Ascending aorta (tissue), 2 donors: ENCODE measurements at regions of chr6 and their contacts with region 1.

Region 1: GRCh38 chr6:125153391-125154117 is at the start of gene TPD52L1:
- DNase-seq: peak; percentile 48 to 89
- H3K4me3 ChIP-seq: peak within 1 kb of the TSS; percentile 74 to 89
- H3K27ac ChIP-seq: peak within 1 kb of the TSS; percentile 81 to 82
- H3K4me1 ChIP-seq: peaks cover 0 to 14% of the 10 kb centered on the region in 2 donors
- H3K27me3 ChIP-seq: no peaks in the 10 kb centered on the region
- CTCF ChIP-seq: peak; percentile 78 to 88 (median 80)
- total RNA-seq, gene TPD52L1: 93.6 TPM

Region 2: GRCh38 chr6:124742971-124743370 is 410.6 kb before region 1 on chr6:
- intact Hi-C with region 1: no loop called
- DNase-seq: no peak
- H3K4me3 ChIP-seq: no peak overlapping the region
- H3K27ac ChIP-seq: no peak overlapping the region
- H3K4me1 ChIP-seq: no peaks in the 10 kb centered on the region
- H3K27me3 ChIP-seq: no peaks in the 10 kb centered on the region
- CTCF ChIP-seq: no peak

Region 3: GRCh38 chr6:124812067-124812466 is 341.5 kb before region 1 on chr6:
- intact Hi-C with region 1: no loop called
- DNase-seq: no peak
- H3K4me3 ChIP-seq: no peak overlapping the region
- H3K27ac ChIP-seq: no peak overlapping the region
- H3K4me1 ChIP-seq: no peaks in the 10 kb centered on the region
- H3K27me3 ChIP-seq: no peaks in the 10 kb centered on the region
- CTCF ChIP-seq: no peak

Region 4: GRCh38 chr6:125191916-125192609 is 38.5 kb after region 1 on chr6:
- intact Hi-C with region 1: loop called (anchors 2 kb)
- DNase-seq: peak; percentile 10 to 77
- H3K4me3 ChIP-seq: no peak overlapping the region
- H3K27ac ChIP-seq: no peak overlapping the region
- H3K4me1 ChIP-seq: peaks cover 10 to 30% of the 10 kb centered on the region in 2 donors
- H3K27me3 ChIP-seq: no peaks in the 10 kb centered on the region
- CTCF ChIP-seq: peak; percentile 49 to 71 (median 65)

Region 5: GRCh38 chr6:125262016-125263013 is 108.8 kb after region 1 on chr6:
- intact Hi-C with region 1: loop called (anchors 5 kb)
- DNase-seq: peak in 1 of 2 donors; percentile 86
- H3K4me3 ChIP-seq: peak overlapping the region in 1 of 2 donors; percentile 16
- H3K27ac ChIP-seq: peak overlapping the region; percentile 66 to 71
- H3K4me1 ChIP-seq: peaks cover 0 to 13% of the 10 kb centered on the region in 2 donors
- H3K27me3 ChIP-seq: no peaks in the 10 kb centered on the region
- CTCF ChIP-seq: no peak

Region 6: GRCh38 chr6:125314019-125314581 is 160.5 kb after region 1 on chr6:
- intact Hi-C with region 1: no loop called
- DNase-seq: peak; percentile 9 to 87
- H3K4me3 ChIP-seq: no peak overlapping the region
- H3K27ac ChIP-seq: peak overlapping the region in 1 of 2 donors; percentile 29
- H3K4me1 ChIP-seq: no peaks in the 10 kb centered on the region
- H3K27me3 ChIP-seq: no peaks in the 10 kb centered on the region
- CTCF ChIP-seq: peak; percentile 77 to 90 (median 83)

Region 7: DNA sequence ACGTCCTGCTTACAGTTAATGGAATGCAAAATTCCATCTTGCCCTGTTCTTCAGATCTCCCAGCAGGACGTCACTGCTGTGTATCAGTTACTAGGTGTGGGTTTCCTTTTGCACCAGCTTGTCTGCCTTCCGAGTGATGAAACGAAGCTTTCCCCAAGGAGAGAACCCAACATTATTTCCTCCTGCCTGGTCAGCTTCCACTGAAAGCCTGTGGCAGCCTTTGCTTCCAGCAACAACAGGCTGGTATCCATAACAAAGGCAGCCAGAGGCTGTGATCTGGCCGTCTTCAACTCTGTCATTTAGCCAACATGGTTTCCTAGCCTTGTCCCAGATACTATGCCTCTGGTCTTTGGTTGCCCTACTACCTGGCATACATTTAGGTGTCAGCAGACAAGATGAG is 517.0 kb after region 1 on chr6:
- intact Hi-C with region 1: no loop called
- DNase-seq: no peak
- H3K4me3 ChIP-seq: no peak overlapping the region
- H3K27ac ChIP-seq: peak overlapping the region; percentile 15 to 52
- H3K4me1 ChIP-seq: peaks cover 0 to 5% of the 10 kb centered on the region in 2 donors
- H3K27me3 ChIP-seq: no peaks in the 10 kb centered on the region
- CTCF ChIP-seq: no peak

Region 8: GRCh38 chr6:125765944-125766343 is 612.4 kb after region 1 on chr6:
- intact Hi-C with region 1: loop called (anchors 5 kb)
- DNase-seq: no peak
- H3K4me3 ChIP-seq: no peak overlapping the region
- H3K27ac ChIP-seq: peak overlapping the region in 1 of 2 donors; percentile 69
- H3K4me1 ChIP-seq: peaks cover 0 to 23% of the 10 kb centered on the region in 2 donors
- H3K27me3 ChIP-seq: no peaks in the 10 kb centered on the region
- CTCF ChIP-seq: no peak

Region 9: GRCh38 chr6:125986300-125987025 is 832.9 kb after region 1 on chr6 and contains the start of gene TRMT11:
- intact Hi-C with region 1: loop called (anchors 10 kb)
- DNase-seq: peak; percentile 31 to 91
- H3K4me3 ChIP-seq: peak within 1 kb of the TSS; percentile 74 to 83
- H3K27ac ChIP-seq: peak within 1 kb of the TSS; percentile 87 to 88
- H3K4me1 ChIP-seq: peaks cover 0 to 3% of the 10 kb centered on the region in 2 donors
- H3K27me3 ChIP-seq: no peaks in the 10 kb centered on the region
- CTCF ChIP-seq: no peak
- total RNA-seq, gene TRMT11: 44.6 TPM